ENCODE measurements at regions of chr5 and their contacts with region 1.

Region 1: GRCh38 chr5:139863855-139864558 is 68.4 kb downstream of the PSD2 start:
- DNase-seq: peak; percentile 72
- ATAC-seq: peak; percentile 78 to 84

Region 2: GRCh38 chr5:138853132-138853531 is 1010.9 kb before region 1 on chr5:
- intact Hi-C with region 1: no loop called
- DNase-seq: no peak
- ATAC-seq: no peak

Region 3: GRCh38 chr5:139968547-139969261 is 104.7 kb after region 1 on chr5:
- intact Hi-C with region 1: loop called in 1 of 2 experiments (anchors 5 kb)
- DNase-seq: peak; percentile 86
- ATAC-seq: peak; percentile 96

Region 4: DNA sequence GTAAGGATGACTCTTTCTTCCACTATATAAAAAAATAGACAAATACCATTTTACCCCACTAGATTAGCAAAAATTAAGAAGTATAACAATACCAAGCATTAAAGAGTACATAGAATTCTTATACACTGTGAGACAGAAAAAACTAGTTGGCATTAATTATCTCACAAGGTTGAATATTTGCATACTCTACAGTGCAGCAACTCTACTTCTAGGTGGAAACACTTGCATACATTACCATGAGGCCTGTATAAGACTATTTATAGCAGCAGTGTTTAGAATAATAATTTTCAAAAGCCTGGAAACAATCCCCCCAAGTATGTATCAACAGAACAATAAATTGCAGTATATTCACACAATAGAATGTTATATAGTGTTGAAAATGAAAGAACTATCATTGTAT is 230.9 kb after region 1 on chr5:
- intact Hi-C with region 1: no loop called
- DNase-seq: no peak
- ATAC-seq: no peak